ENCODE measurements at regions of chr5 and their contacts with region 1.

Region 1: GRCh38 chr5:137888857-137889759 is at the start of gene PKD2L2:
- DNase-seq: no peak
- H3K4me3 ChIP-seq: peak within 1 kb of the TSS; percentile 41
- H3K27ac ChIP-seq: peak within 1 kb of the TSS; percentile 78
- H3K4me1 ChIP-seq: peaks cover 25% of the 10 kb centered on the region
- H3K27me3 ChIP-seq: no peaks in the 10 kb centered on the region
- CTCF ChIP-seq: peak in 1 of 3 experiments; percentile 9
- POLR2A ChIP-seq: no peak
- total RNA-seq, gene PKD2L2: not detected

Region 2: DNA sequence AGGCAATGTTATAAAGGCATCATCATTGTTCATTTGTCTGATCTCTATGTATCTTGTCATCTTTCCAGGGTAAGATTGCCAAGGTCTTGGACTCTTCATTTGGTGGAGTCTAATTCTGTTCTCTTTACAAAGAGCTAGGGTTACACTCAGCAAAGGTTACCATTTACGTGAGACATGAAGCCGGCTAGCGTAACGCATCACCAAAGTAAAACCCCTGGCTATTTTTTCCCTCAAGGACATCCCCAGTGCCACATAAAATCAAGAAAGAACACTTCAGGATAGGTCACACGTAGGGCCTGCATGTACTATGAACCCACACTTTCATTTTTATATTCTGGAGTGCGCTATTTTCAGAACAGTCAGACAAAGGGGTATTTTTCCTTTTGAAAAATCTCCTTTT is 41.4 kb before region 1 on chr5:
- intact Hi-C with region 1: no loop called
- DNase-seq: no peak
- H3K4me3 ChIP-seq: no peak overlapping the region
- H3K27ac ChIP-seq: no peak overlapping the region
- H3K4me1 ChIP-seq: no peaks in the 10 kb centered on the region
- H3K27me3 ChIP-seq: no peaks in the 10 kb centered on the region
- CTCF ChIP-seq: no peak
- POLR2A ChIP-seq: no peak

Region 3: GRCh38 chr5:138331449-138332368 is 442.6 kb after region 1 on chr5 and contains the start of gene CDC25C:
- intact Hi-C with region 1: loop called (anchors 5 kb)
- DNase-seq: peak in 1 of 2 donors; percentile 98
- H3K4me3 ChIP-seq: peak within 1 kb of the TSS; percentile 45 to 53
- H3K27ac ChIP-seq: no peak within 1 kb of the TSS
- H3K4me1 ChIP-seq: peaks cover 19% of the 10 kb centered on the region
- H3K27me3 ChIP-seq: no peaks in the 10 kb centered on the region
- CTCF ChIP-seq: no peak
- POLR2A ChIP-seq: no peak
- total RNA-seq, gene CDC25C: 2.0 TPM